K562 (cell line): ENCODE measurements at regions of chr2 and their contacts with region 1.

Region 1: DNA sequence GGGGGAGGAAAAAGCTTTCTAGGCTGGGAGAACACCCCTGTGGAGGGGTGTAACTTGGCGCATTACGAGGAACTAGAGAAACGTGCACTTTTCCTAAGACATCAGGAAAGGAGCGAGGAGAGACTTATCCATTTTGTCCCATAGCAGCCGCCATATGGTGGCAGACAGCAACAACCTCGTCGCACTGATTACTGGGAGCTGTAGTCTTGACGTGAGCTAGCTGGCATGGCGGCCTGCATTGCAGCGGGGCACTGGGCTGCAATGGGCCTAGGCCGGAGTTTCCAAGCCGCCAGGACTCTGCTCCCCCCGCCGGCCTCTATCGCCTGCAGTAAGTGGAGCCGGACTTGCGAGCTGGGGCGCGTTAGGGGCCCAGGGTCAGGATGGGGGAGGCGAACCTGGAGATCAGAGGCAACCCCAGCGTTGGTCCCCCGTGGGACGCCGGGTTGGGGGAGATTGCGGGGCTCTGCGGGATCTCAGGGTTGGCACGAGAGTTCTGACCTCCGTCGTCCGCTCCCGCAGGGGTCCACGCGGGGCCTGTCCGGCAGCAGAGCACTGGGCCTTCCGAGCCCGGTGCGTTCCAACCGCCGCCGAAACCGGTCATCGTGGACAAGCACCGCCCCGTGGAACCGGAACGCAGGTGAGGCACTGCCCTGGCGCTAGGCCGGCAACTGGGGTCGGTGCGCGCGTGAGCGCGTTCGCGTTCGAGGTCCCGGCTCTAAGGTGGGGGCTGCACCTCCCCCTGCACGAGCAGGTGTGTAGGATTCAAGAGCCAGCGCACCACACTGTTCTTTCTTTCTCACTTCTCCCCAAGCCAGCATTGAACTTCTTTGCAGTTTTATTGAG is at the start of gene MRPL19:
- DNase-seq: peak; percentile 74 to 91 (median 84)
- ATAC-seq: peak; percentile 97
- H3K4me3 ChIP-seq: peak within 1 kb of the TSS; percentile 80
- H3K27ac ChIP-seq: peak within 1 kb of the TSS; percentile 66
- H3K4me1 ChIP-seq: peaks cover 0 to 7% of the 10 kb centered on the region in 2 experiments; a peak in 1 of 5 replicates
- H3K27me3 ChIP-seq: no peaks in the 10 kb centered on the region
- CTCF ChIP-seq: no peak
- EP300 ChIP-seq: no peak
- POLR2A ChIP-seq: peak; percentile 82
- RAD21 ChIP-seq: no peak
- polyA plus RNA-seq, gene MRPL19: 9.7 to 11.8 TPM

Region 2: GRCh38 chr2:75680402-75680801 is 33.6 kb after region 1 on chr2:
- CTCF ChIA-PET with region 1: interaction called, 14 read pairs
- POLR2A ChIA-PET with region 1: interaction called, 3 read pairs
- in situ Hi-C with region 1: loop called (anchors 5 kb)
- intact Hi-C with region 1: no loop called
- DNase-seq: no peak
- ATAC-seq: no peak
- H3K4me3 ChIP-seq: no peak overlapping the region
- H3K27ac ChIP-seq: no peak overlapping the region
- H3K4me1 ChIP-seq: peaks cover 6 to 15% of the 10 kb centered on the region in 2 experiments; a peak in 4 of 5 replicates
- H3K27me3 ChIP-seq: no peaks in the 10 kb centered on the region
- CTCF ChIP-seq: no peak
- EP300 ChIP-seq: no peak
- POLR2A ChIP-seq: no peak
- RAD21 ChIP-seq: no peak

Region 3: DNA sequence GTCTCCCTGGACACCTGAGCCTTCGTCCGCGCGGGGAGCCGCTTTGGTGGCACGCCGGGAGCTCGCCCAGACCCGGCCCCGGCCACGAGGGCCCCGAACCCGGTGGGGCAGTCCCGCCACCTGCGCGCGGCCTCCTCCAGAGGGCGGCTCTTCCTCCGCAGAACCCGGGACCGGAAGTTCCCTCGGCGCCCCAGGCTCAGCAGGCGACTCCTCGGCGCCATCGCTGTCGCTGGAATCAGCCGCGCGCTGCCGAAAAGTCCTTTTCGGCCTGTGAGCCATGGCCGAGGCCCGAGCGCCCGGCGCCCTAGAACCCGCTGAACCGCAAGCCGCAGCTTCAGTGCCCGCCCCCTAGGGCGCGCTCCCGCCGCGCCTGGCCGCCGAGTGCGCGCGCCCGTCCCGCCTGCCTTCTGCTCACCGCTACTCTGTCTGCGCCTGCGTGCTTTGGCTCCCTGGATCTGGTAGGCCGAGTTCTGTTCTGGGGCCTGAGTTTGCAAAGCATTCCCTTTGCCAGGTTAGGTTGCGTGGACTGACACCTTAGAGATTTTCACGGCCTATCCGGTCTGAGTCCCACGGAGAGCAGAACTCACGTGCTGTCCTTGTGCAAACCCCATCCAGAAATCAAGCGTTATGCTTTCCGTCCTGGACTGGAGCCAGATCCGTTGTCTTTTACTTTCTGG is 63.9 kb after region 1 on chr2 and contains the start of gene GCFC2:
- CTCF ChIA-PET with region 1: interaction called, 3 read pairs
- POLR2A ChIA-PET with region 1: no interaction called
- in situ Hi-C with region 1: no loop called
- intact Hi-C with region 1: loop called (anchors 2 kb)
- DNase-seq: peak; percentile 92 to 94 (median 94)
- ATAC-seq: peak; percentile 96
- H3K4me3 ChIP-seq: peak within 1 kb of the TSS; percentile 52
- H3K27ac ChIP-seq: peak within 1 kb of the TSS; percentile 95
- H3K4me1 ChIP-seq: peaks cover 3 to 12% of the 10 kb centered on the region in 2 experiments; a peak in 1 of 5 replicates
- H3K27me3 ChIP-seq: peaks cover 0 to 2% of the 10 kb centered on the region in 2 experiments; a peak in 3 of 5 replicates
- CTCF ChIP-seq: peak in 2 of 3 experiments; percentile 39 to 44; a peak in 3 of 6 replicates
- EP300 ChIP-seq: no peak
- POLR2A ChIP-seq: peak; percentile 94
- RAD21 ChIP-seq: no peak
- polyA plus RNA-seq, gene GCFC2: 10.5 to 13.5 TPM

Region 4: DNA sequence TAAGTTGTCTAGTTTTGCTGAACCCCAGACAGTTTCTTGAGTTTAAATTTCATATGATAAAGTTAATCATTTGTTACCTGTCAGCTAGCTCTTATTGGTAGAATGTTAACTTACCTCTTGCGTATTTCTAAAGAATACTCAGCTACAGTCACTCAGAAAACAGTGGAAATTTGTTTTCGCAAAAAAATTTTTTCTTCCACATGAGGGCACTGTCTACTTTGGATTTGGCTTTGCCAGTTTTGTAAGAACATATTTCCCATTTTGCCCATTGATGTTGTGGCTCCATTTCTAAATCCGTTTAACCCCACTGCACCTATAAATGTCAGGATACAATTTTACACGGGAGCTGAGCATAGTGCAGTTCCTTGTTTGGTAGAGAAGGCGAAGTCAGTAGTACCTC is 83.1 kb after region 1 on chr2:
- CTCF ChIA-PET with region 1: no interaction called
- POLR2A ChIA-PET with region 1: no interaction called
- in situ Hi-C with region 1: no loop called
- intact Hi-C with region 1: no loop called
- DNase-seq: peak in 1 of 4 experiments; percentile 8
- ATAC-seq: no peak; the same call in 2 of the 3 replicates
- H3K4me3 ChIP-seq: no peak overlapping the region
- H3K27ac ChIP-seq: no peak overlapping the region
- H3K4me1 ChIP-seq: no peaks in the 10 kb centered on the region
- H3K27me3 ChIP-seq: no peaks in the 10 kb centered on the region; a peak in 1 of 5 replicates
- CTCF ChIP-seq: peak; percentile 25 to 59 (median 33); a peak in 4 of 6 replicates
- EP300 ChIP-seq: no peak
- POLR2A ChIP-seq: no peak
- RAD21 ChIP-seq: peak; percentile 36 to 67